Heart left ventricle (tissue), 16 donors: ENCODE measurements at regions of chr11 and their contacts with region 1.

Region 1: DNA sequence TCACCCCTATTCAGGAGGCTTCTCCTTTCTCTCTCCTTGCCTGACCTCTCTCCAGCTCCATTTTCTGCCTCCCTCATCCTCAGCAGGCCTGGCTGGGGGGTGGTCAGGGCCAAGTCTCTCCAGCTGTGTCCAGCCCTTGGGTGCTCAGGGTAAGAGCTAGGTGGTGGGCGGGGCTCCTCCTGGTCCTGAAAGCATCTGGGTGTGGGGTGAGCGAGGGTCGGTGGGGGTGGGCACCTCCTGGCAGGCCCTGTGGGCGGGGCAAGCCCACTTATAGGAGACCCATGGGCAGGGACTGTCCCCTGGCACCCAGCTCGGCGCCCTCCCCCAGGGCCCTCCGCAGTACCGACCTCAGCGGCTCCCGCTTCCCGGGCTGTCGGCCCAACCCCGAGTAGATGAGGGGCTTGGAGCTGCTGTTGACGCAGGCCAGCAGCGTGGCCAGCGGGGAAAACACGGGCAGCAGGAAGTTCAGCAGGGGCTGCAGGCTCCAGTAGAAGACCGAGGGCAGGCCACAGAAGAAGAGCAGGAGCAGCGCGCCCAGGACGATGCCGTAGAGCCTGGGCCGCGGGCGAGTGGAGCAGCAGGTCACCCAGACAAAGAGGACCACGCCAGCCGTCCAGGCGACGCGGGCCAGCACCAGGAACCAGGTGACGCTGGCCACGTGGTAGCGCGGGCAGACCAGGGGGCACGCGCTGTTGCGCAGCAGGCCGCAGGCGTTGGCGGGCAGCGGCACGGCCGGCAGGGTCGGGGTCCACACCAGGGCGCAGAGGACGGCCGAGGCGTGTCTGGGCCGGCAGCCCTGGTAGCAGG is 734 bp downstream of the MRGPRG start:
- DNase-seq: peak in 2 of 5 donors; percentile 11 to 51
- ATAC-seq: no peak
- H3K4me3 ChIP-seq: no peak overlapping the region
- H3K27ac ChIP-seq: no peak overlapping the region
- H3K4me1 ChIP-seq: peaks cover 0 to 15% (median 0%) of the 10 kb centered on the region in 12 donors
- H3K27me3 ChIP-seq: peaks cover 0 to 65% (median 27%) of the 10 kb centered on the region in 9 donors
- CTCF ChIP-seq: no peak
- POLR2A ChIP-seq: no peak

Region 2: GRCh38 chr11:3037040-3037944 is 180.6 kb before region 1 on chr11:
- intact Hi-C with region 1: loop called in 9 of 10 experiments (anchors 2 to 10 kb)
- DNase-seq: peak; percentile 79 to 90 (median 81)
- ATAC-seq: peak; percentile 59 to 79 (median 76)
- H3K4me3 ChIP-seq: no peak overlapping the region
- H3K27ac ChIP-seq: peak overlapping the region in 4 of 12 donors; percentile 18 to 58 (median 43)
- H3K4me1 ChIP-seq: peaks cover 0 to 32% (median 9%) of the 10 kb centered on the region in 12 donors
- H3K27me3 ChIP-seq: no peaks in the 10 kb centered on the region
- CTCF ChIP-seq: peak; percentile 72 to 91 (median 81)
- POLR2A ChIP-seq: no peak

Region 3: DNA sequence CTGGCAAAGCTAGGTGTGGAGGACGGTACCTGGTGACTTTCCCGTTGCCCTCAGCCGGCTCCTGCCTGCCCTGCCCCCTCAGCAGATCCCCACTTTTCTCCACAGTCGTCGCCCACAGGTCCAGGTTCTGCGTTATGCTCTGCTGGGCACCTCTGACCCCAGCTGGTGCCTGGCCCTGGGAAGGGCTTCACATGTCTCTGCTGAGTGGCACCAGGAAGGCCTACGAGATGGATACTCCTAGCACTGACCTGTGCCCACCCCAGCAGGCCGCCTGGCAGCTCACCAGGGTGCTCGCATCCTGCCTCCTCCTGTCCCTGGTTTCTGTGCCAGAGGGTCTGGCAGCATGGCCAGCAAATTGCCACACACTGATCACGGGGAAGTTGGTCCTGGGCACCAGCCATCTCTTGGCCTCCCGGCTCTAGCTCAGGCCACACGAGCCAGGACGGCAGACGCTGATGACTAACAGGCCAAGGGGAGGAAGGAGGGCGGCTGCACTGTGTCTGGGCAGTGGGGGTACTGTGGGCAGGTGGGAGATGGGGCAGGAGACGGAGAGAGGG is 174.5 kb before region 1 on chr11:
- intact Hi-C with region 1: loop called in 7 of 10 experiments (anchors 5 to 10 kb)
- DNase-seq: peak; percentile 51 to 88 (median 85)
- ATAC-seq: peak; percentile 70 to 85 (median 82)
- H3K4me3 ChIP-seq: no peak overlapping the region
- H3K27ac ChIP-seq: peak overlapping the region in 11 of 12 donors; percentile 41 to 81 (median 65)
- H3K4me1 ChIP-seq: peaks cover 0 to 32% (median 24%) of the 10 kb centered on the region in 12 donors
- H3K27me3 ChIP-seq: no peaks in the 10 kb centered on the region
- CTCF ChIP-seq: no peak
- POLR2A ChIP-seq: no peak

Region 4: GRCh38 chr11:3109921-3110706 is 107.8 kb before region 1 on chr11:
- intact Hi-C with region 1: loop called in 9 of 10 experiments (anchors 1 to 5 kb)
- DNase-seq: peak; percentile 29 to 72 (median 39)
- ATAC-seq: peak; percentile 58 to 84 (median 78)
- H3K4me3 ChIP-seq: no peak overlapping the region
- H3K27ac ChIP-seq: no peak overlapping the region
- H3K4me1 ChIP-seq: peaks cover 0 to 14% (median 0%) of the 10 kb centered on the region in 12 donors
- H3K27me3 ChIP-seq: no peaks in the 10 kb centered on the region
- CTCF ChIP-seq: peak; percentile 56 to 75 (median 64)
- POLR2A ChIP-seq: no peak

Region 5: GRCh38 chr11:3160252-3161031 is 57.4 kb before region 1 on chr11:
- intact Hi-C with region 1: no loop called
- DNase-seq: peak; percentile 88 to 94 (median 92)
- ATAC-seq: peak; percentile 74 to 88 (median 84)
- H3K4me3 ChIP-seq: peak overlapping the region; percentile 6 to 65 (median 58)
- H3K27ac ChIP-seq: peak overlapping the region; percentile 7 to 88 (median 72)
- H3K4me1 ChIP-seq: peaks cover 7 to 85% (median 66%) of the 10 kb centered on the region in 12 donors
- H3K27me3 ChIP-seq: no peaks in the 10 kb centered on the region
- CTCF ChIP-seq: no peak
- POLR2A ChIP-seq: no peak